ENCODE measurements at regions of chr3 and their contacts with region 1.

Region 1: DNA sequence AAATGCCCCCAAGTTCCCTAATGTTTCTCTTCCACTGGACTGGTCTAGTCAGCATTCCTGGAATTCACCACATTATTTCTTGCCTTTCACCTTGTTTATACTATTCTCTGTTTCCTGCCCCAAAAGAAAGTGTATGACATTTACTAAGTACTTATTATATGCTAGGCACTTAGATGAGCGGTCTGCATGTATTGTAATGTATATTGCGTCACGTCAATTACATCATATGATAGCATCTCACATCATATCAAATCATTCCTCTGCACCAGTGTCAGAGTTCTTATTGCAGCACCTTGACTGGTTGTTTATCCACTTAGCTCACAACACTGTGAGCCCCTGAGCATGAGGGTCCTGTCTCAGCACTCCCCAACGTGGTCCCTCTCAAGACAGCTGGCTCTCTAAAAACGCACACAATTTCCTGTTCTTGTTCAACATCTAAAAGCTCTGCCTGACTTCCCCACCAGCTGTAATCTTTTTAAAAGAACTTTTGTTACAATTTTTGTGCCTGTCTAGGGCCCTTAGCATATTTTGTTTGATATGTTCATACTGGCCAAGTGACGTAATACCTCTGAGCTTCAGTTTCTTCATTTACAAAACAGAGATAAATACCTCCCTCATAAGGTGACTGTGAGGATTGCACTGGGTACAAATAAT is 58.8 kb downstream of the ARHGAP31 start:
- DNase-seq: peak in 4 of 14 experiments; percentile 13 to 80 (median 64)
- ATAC-seq: peak; percentile 73
- H3K4me3 ChIP-seq: no peak overlapping the region
- H3K4me3 Mint-ChIP-seq: no peak overlapping the region
- H3K27ac ChIP-seq: no peak overlapping the region
- H3K27ac Mint-ChIP-seq: peak overlapping the region; percentile 58
- H3K4me1 ChIP-seq: peaks cover 21% of the 10 kb centered on the region
- H3K4me1 Mint-ChIP-seq: peaks cover 45% of the 10 kb centered on the region
- H3K27me3 ChIP-seq: no peaks in the 10 kb centered on the region
- H3K27me3 Mint-ChIP-seq: no peaks in the 10 kb centered on the region
- CTCF ChIP-seq: peak; percentile 56

Region 2: DNA sequence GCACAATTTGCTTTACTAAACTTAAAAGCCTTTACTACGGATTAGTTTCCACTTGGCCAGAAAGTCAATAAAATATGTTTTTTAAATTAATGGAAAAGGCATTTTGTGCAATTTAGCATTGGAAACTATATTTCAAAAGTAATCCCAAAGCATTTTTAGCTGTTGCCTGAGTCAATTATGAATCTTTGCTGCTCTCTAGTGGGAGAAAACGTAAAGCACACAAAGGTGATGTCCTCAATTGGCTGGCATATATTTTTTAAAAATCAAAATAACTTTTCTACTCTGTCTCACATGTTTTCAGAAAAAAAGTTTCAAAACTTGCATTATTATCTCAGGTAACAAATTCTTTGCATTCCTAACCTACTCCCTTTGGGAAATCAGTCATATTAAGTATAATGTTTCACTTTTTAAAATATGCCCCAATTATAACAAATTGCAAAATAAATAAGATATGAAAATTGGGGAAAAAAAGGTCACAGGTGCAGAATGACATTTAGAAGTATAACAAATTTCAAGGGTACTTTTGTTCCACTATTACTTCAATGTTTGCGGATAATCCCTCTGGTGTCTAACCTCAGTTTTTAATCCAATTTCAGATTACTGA is 254.3 kb before region 1 on chr3:
- CTCF ChIA-PET with region 1: no interaction called
- POLR2A ChIA-PET with region 1: no interaction called
- intact Hi-C with region 1: loop called in 1 of 2 experiments (anchors 1 kb)
- DNase-seq: peak in 4 of 14 experiments; percentile 14 to 67 (median 62)
- ATAC-seq: no peak
- H3K4me3 ChIP-seq: no peak overlapping the region
- H3K4me3 Mint-ChIP-seq: no peak overlapping the region
- H3K27ac ChIP-seq: no peak overlapping the region
- H3K27ac Mint-ChIP-seq: no peak overlapping the region
- H3K4me1 ChIP-seq: no peaks in the 10 kb centered on the region
- H3K4me1 Mint-ChIP-seq: no peaks in the 10 kb centered on the region
- H3K27me3 ChIP-seq: no peaks in the 10 kb centered on the region
- H3K27me3 Mint-ChIP-seq: no peaks in the 10 kb centered on the region
- CTCF ChIP-seq: peak; percentile 90

Region 3: GRCh38 chr3:119219069-119219468 is 133.9 kb before region 1 on chr3:
- CTCF ChIA-PET with region 1: interaction called, 4 read pairs
- POLR2A ChIA-PET with region 1: interaction called, 3 read pairs
- intact Hi-C with region 1: loop called in 1 of 2 experiments (anchors 5 kb)
- DNase-seq: peak in 9 of 14 experiments; percentile 14 to 71 (median 37)
- ATAC-seq: peak; percentile 99
- H3K4me3 ChIP-seq: no peak overlapping the region
- H3K4me3 Mint-ChIP-seq: peak overlapping the region; percentile 71
- H3K27ac ChIP-seq: peak overlapping the region; percentile 41 to 44
- H3K27ac Mint-ChIP-seq: peak overlapping the region; percentile 93
- H3K4me1 ChIP-seq: peaks cover 26% of the 10 kb centered on the region
- H3K4me1 Mint-ChIP-seq: peaks cover 68% of the 10 kb centered on the region
- H3K27me3 ChIP-seq: no peaks in the 10 kb centered on the region
- H3K27me3 Mint-ChIP-seq: no peaks in the 10 kb centered on the region
- CTCF ChIP-seq: no peak

Region 4: GRCh38 chr3:119293871-119294695 is 58.9 kb before region 1 on chr3 and contains the start of gene ARHGAP31:
- CTCF ChIA-PET with region 1: interaction called, 22 read pairs
- POLR2A ChIA-PET with region 1: interaction called, 39 read pairs
- intact Hi-C with region 1: loop called in 1 of 2 experiments (anchors 1 kb)
- DNase-seq: peak; percentile 60 to 96 (median 78)
- ATAC-seq: peak; percentile 68
- H3K4me3 ChIP-seq: peak within 1 kb of the TSS; percentile 84
- H3K4me3 Mint-ChIP-seq: peak within 1 kb of the TSS; percentile 84
- H3K27ac ChIP-seq: peak within 1 kb of the TSS; percentile 95 to 96
- H3K27ac Mint-ChIP-seq: peak within 1 kb of the TSS; percentile 100
- H3K4me1 ChIP-seq: peaks cover 65% of the 10 kb centered on the region
- H3K4me1 Mint-ChIP-seq: peaks cover 74% of the 10 kb centered on the region
- H3K27me3 ChIP-seq: no peaks in the 10 kb centered on the region
- H3K27me3 Mint-ChIP-seq: no peaks in the 10 kb centered on the region
- CTCF ChIP-seq: no peak
- total RNA-seq, gene ARHGAP31: 2.4 to 2.9 TPM

Region 5: GRCh38 chr3:119362940-119363725 is 10.2 kb after region 1 on chr3:
- CTCF ChIA-PET with region 1: no interaction called
- POLR2A ChIA-PET with region 1: no interaction called
- intact Hi-C with region 1: no loop called
- DNase-seq: no peak
- ATAC-seq: no peak
- H3K4me3 ChIP-seq: no peak overlapping the region
- H3K4me3 Mint-ChIP-seq: no peak overlapping the region
- H3K27ac ChIP-seq: no peak overlapping the region
- H3K27ac Mint-ChIP-seq: no peak overlapping the region
- H3K4me1 ChIP-seq: no peaks in the 10 kb centered on the region
- H3K4me1 Mint-ChIP-seq: no peaks in the 10 kb centered on the region
- H3K27me3 ChIP-seq: no peaks in the 10 kb centered on the region
- H3K27me3 Mint-ChIP-seq: no peaks in the 10 kb centered on the region
- CTCF ChIP-seq: no peak

Measured in CD4-positive, alpha-beta T cell (primary cell).